Activated B cell treated with CpG ODN at 0.5 μM for 24 hours (primary cell): ENCODE measurements at regions of chr6 and their contacts with region 1.

Region 1: DNA sequence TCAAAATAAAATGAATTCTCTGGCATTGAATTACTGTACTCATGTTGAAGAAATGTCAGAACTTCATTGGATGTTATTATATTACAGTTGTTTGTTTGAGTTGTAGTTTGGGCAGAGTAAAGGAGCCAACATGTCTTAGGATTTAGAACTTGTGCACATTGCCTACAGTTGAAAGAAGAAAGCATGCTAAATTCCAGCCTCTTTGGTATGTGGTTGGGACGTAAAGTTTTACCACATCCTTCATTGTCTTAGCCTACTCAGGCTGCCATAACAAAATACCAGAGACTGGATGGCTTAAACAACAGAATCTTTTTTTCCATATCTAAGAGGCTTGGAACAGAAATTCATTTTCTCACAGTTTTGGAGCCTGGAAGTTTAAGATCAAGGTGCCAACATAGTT is 42.4 kb downstream of the HFE start:
- DNase-seq: no peak
- ATAC-seq: no peak
- H3K4me3 Mint-ChIP-seq: no peak overlapping the region
- H3K27ac Mint-ChIP-seq: no peak overlapping the region
- H3K4me1 Mint-ChIP-seq: peaks cover 71% of the 10 kb centered on the region
- H3K27me3 Mint-ChIP-seq: no peaks in the 10 kb centered on the region
- CTCF ChIP-seq: no peak

Region 2: DNA sequence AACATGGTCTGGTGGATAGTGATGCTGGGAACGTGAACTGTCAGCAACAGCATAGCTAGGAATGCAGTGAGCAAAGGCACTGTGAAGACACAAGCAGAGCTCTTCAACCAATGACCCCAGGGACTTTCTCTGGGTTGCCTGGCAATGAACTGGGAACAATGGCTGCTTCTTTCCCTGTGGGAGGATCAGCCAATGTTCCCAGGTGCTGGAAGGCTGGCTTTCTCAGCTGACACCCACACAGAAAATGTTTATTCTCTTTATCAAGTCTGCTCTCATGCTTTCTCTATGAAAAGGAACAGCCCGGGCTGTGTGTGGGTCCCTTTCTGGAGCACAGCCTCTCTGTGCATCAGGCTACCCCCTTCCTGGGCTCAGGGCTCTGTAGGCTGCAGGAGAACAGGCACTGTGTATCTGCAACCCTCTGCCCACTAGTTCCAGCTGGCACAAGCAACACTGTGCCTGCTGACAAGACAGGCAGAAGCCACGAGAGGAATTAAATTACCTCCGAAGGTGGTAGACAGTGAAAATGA is 11.8 kb after region 1 on chr6:
- CTCF ChIA-PET with region 1: interaction called, 5 read pairs
- POLR2A ChIA-PET with region 1: interaction called, 70 read pairs
- intact Hi-C with region 1: loop called (anchors 2 kb)
- DNase-seq: no peak
- ATAC-seq: no peak
- H3K4me3 Mint-ChIP-seq: no peak overlapping the region
- H3K27ac Mint-ChIP-seq: no peak overlapping the region
- H3K4me1 Mint-ChIP-seq: peaks cover 7% of the 10 kb centered on the region
- H3K27me3 Mint-ChIP-seq: no peaks in the 10 kb centered on the region
- CTCF ChIP-seq: no peak